GM10248 (cell line): ENCODE measurements at regions of chr19 and their contacts with region 1.

Region 1: GRCh38 chr19:4638828-4639530 is at the start of gene TNFAIP8L1:
- DNase-seq: peak; percentile 100
- CTCF ChIP-seq: no peak

Region 2: DNA sequence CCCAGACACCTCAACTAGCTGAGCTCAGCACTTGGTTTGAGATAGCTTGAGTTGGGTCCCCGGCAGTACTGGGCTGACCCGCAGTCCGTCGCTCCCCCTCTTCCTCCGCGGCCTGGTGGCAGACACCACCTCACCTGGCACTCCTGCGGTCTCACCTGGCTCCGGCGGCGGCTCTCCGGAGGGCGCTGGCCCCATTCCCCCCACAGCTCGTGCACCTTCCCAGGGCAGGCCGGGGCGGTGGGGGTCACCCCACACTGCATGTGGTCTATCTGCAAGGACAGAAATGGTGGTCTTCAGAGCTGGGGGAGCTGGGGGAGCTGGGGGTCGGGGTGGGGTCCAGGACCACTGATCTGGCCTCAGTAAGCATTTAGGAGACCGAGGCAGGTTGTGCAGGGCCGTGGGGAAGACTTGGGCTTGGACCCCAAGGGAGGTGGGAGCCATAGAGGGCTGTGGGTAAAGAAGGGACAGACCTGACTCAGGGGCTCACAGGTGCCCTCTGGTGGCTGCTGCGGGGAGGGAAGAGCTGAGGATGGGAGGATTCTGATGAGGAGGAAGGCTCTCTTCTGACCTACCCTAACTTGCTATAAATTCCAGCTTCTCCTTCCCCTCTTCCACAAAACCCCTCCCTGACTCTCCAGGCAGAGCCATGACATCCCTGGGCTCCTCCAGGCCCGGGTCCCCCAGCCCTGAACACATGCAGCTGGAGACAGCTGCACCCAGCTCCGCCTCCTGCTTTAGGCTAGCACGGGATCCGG is 114.0 kb before region 1 on chr19:
- CTCF ChIA-PET with region 1: interaction called, 27 read pairs
- POLR2A ChIA-PET with region 1: no interaction called
- DNase-seq: peak; percentile 77
- CTCF ChIP-seq: peak; percentile 78

Region 3: DNA sequence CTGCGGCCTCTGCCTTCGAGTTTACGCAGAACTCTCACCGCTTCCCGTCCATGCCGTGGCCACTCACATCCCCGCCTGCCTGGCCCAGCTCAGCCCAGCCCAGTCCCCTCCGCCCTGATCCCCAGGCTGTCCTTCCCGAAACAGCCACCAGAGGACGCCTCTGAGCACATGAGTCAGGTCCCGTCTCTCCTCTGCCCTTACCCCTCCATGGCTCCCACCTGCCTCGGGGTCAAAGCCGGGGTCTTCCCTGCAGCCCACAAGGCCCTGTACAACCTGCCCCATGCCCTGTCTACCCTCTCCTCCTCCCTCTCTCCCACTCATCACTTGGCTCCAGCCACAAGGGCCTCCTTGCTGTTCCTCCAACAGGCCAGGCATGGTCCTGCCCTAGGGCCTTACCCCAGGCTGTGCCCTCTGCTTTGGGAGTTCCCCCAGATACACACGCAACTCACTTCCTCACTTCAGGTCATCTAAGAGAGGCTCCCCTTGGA is 71.4 kb before region 1 on chr19:
- CTCF ChIA-PET with region 1: interaction called, 102 read pairs
- POLR2A ChIA-PET with region 1: no interaction called
- DNase-seq: no peak
- CTCF ChIP-seq: peak; percentile 62

Region 4: DNA sequence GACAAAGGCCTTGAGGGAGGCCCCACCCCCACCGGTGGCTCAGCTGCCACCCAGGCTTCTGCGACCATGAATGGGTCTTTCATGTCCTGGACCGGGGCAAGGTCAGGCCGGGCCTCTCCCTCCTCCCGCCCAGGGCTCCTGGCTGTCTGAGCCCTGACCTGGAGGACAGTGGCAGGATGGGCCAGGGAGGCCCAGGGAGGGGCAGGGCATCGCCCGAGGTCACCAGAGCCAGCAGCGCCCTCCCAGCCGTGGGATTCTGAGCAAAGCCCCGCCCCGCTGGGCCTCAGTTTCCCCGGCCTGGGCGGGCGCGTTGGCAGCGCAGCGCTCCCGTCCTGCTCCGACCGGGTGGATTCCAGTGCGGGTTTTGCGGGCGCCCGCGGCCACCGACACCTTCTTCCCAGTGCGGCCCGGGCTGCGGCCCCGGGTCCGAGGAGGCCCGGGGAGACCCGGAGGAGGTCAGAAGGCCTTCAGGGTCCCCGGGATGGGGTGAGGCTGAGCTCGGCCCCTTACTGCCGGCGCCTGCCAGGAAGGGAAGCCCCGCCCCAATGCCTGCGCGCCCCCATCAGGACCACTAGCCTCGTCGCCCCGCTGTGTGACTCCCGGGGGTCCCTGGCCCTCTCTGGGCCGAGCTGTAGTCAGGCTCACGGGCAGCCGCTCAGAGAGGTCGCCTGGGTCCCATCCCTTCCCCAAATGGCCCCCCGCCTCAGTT is 54.9 kb before region 1 on chr19:
- CTCF ChIA-PET with region 1: interaction called, 46 read pairs
- POLR2A ChIA-PET with region 1: no interaction called
- DNase-seq: no peak
- CTCF ChIP-seq: no peak

Region 5: GRCh38 chr19:4597975-4598671 is 40.9 kb before region 1 on chr19:
- CTCF ChIA-PET with region 1: interaction called, 17 read pairs
- POLR2A ChIA-PET with region 1: no interaction called
- DNase-seq: peak; percentile 88
- CTCF ChIP-seq: no peak

Region 6: DNA sequence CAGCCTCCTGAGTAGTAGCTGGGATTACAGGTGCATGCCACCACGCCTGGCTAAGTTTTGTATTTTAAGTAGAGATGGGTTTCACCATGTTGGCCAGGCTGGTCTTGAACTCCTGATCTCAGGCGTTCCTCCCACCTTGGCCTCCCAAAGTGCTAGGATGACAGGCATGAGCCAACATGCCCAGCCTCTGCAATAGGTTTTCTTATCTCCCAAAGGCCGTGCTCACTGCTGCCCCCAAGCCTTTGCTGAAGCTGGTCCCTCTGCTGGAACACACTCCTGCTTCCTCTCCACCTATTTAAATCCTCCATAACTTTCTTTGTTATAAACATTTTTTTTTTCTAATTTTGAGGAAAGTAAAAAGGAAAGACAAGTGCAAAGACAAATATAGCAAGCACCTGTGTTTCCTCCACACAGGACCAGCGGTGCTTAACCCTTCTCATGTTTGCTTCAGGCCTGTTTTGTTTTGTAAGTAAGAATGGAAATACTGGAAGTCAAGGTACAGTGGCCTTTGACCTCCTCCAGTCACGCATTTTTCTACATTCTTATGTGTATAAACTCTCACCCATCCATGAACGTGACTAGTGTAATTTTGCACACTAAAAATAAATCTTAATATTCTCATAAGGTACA is 14.1 kb before region 1 on chr19:
- CTCF ChIA-PET with region 1: interaction called, 33 read pairs
- POLR2A ChIA-PET with region 1: no interaction called
- DNase-seq: no peak
- CTCF ChIP-seq: peak; percentile 21

Region 7: GRCh38 chr19:4669723-4670480 is 30.9 kb after region 1 on chr19 and contains the start of gene MYDGF:
- CTCF ChIA-PET with region 1: interaction called, 12 read pairs
- POLR2A ChIA-PET with region 1: interaction called, 3 read pairs
- DNase-seq: peak; percentile 100
- CTCF ChIP-seq: no peak

Region 8: GRCh38 chr19:4732680-4733114 is 93.7 kb after region 1 on chr19:
- CTCF ChIA-PET with region 1: no interaction called
- POLR2A ChIA-PET with region 1: no interaction called
- DNase-seq: peak; percentile 83
- CTCF ChIP-seq: peak; percentile 59